Posterior cingulate gyrus (tissue), 11 donors: ENCODE measurements at regions of chr1 and their contacts with region 1.

Region 1: GRCh38 chr1:30707412-30708360 is 15.7 kb downstream of the MATN1 start:
- DNase-seq: peak; percentile 73 to 99 (median 88)

Region 2: DNA sequence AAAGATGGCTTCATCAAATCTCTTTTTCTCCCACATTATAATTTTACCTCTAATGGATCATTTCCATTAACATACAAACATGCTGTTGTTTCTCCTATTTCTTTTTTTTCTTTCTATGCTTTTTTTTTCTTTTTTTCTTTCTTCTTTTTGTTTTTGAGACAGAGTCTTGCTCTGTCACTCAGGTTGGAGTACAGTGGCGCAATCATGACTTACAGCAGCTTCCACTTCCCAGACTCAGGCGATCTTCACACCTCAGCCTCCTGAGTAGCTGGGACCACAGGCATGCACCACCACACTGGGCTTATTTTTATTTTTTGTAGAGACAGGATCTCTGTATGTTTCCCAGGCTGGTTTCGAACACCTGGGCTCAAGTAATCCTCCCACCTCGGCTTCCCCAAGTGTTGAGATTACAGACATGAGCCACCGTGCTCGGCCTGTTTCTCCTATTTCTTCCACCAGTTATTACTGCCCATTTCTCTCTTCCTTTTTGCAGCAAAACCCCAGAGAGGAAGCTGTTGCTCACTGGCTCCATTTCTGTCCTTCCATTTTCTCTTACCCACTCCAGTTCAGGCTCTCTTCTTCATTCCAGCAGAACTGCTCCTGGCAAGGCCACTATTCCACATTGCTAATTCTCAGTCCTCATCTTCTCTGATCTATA is 1927.8 kb before region 1 on chr1:
- intact Hi-C with region 1: loop called (anchors 10 kb)
- DNase-seq: peak in 1 of 10 donors; percentile 15

Region 3: GRCh38 chr1:30461639-30462038 is 246.0 kb before region 1 on chr1:
- intact Hi-C with region 1: no loop called
- DNase-seq: peak in 1 of 10 donors; percentile 1